ENCODE measurements at regions of chr1 and their contacts with region 1.

Region 1: DNA sequence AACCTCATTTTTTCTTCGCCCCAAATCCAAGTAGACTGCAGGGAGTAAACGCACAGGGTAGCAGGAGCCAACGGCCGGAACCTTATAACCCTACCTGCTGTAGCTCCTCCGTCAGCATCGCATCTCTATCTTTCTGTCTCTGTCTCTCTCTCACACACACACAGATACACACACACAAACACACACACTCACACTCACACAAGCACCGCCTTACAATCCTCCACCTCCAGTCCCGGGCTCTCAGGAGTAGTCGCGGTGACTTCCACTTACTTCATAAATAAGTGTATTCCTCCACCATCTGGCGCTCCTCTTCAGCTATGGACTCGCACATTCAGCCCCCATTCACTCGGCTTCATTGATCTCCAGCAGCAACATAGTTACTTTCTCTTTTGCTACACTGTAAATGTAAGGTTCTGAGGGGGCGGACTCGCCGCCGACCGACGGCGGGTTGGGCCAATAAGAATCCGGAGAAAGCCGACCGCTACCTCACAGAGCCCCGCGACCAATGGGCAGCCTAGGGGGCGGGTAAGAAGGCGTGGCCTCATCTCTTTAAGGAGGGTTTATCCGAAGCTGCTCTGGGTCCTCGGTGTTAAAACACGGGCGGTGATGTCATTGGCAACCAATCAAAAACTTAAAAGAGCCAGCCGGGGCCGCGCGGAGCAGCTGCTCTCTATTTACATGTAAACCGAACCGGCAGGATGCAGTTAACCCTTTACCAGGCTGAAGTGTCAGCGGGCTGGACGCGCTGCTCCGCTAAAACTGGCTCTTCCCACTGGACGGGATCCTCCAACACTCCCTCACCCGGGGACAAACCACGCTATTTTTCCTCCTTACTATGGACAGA is at the start of gene DUSP10:
- DNase-seq: peak; percentile 99
- H3K4me3 Mint-ChIP-seq: no peak within 1 kb of the TSS
- H3K27ac Mint-ChIP-seq: no peak within 1 kb of the TSS
- H3K4me1 Mint-ChIP-seq: peaks cover 41% of the 10 kb centered on the region
- H3K27me3 Mint-ChIP-seq: no peaks in the 10 kb centered on the region
- CTCF ChIP-seq: no peak
- total RNA-seq, gene DUSP10: 55.1 and 58.2 TPM in 2 replicates

Region 2: GRCh38 chr1:221478050-221478949 is 263.6 kb before region 1 on chr1:
- CTCF ChIA-PET with region 1: interaction called, 19 read pairs
- intact Hi-C with region 1: loop called (anchors 2 kb)
- DNase-seq: peak; percentile 81
- H3K4me3 Mint-ChIP-seq: no peak overlapping the region
- H3K27ac Mint-ChIP-seq: no peak overlapping the region
- H3K4me1 Mint-ChIP-seq: peaks cover 14% of the 10 kb centered on the region
- H3K27me3 Mint-ChIP-seq: no peaks in the 10 kb centered on the region
- CTCF ChIP-seq: peak; percentile 71

Region 3: DNA sequence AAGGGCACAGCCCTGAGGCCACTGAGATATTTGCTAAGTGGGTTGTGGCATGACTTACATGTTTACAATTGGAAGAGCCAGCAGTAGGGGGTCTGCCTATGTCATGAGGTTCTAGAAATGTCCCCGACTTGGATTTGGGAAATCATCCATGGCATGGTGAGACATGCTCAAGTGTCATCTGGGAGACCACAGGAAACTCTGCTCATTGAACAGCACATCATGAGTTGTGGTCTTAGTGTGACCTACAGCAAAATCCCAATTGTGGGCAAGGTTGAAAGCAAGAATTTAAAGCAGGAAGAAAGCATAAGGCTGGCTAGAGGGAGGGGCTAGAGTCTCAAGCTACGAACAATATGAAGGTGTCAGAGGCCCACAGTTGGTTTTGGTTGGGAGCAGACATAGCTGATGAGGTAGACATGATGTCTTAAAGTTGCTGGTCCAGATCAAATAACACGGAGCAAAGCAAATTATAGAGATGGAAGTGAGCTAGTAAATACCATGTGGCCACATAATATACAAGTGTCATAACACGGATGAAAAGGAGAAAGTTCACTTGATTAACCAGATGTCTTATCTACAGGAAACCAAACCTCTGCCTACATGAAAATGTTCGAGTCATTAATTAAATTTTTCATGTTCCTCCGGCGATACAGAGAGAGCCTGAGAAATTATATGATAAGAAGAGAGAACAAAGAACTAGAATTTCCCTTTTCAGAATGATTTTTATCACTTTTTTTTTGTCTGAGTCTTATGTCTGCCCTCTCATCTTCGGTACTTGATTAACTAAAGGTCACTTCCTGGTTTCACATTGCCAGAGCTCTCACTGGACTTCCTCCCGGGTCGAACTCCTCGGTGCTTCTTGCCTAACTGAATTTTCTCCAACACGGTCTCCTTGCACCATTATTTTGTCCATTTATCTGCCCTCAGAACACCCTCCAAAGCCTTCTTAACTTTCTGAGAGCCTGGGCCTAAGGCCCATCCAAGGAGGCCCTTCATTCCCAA is 67.4 kb after region 1 on chr1:
- CTCF ChIA-PET with region 1: no interaction called
- intact Hi-C with region 1: loop called (anchors 5 kb)
- DNase-seq: no peak
- H3K4me3 Mint-ChIP-seq: peak overlapping the region; percentile 13
- H3K27ac Mint-ChIP-seq: peak overlapping the region; percentile 71
- H3K4me1 Mint-ChIP-seq: peaks cover 65% of the 10 kb centered on the region
- H3K27me3 Mint-ChIP-seq: no peaks in the 10 kb centered on the region
- CTCF ChIP-seq: no peak

Region 4: GRCh38 chr1:221886743-221887413 is 144.9 kb after region 1 on chr1:
- CTCF ChIA-PET with region 1: interaction called, 3 read pairs
- intact Hi-C with region 1: loop called (anchors 5 kb)
- DNase-seq: peak; percentile 91
- H3K4me3 Mint-ChIP-seq: peak overlapping the region; percentile 57
- H3K27ac Mint-ChIP-seq: peak overlapping the region; percentile 93
- H3K4me1 Mint-ChIP-seq: peaks cover 48% of the 10 kb centered on the region
- H3K27me3 Mint-ChIP-seq: no peaks in the 10 kb centered on the region
- CTCF ChIP-seq: peak; percentile 23

Region 5: GRCh38 chr1:221937155-221937953 is 195.4 kb after region 1 on chr1:
- CTCF ChIA-PET with region 1: no interaction called
- intact Hi-C with region 1: no loop called
- DNase-seq: no peak
- H3K4me3 Mint-ChIP-seq: no peak overlapping the region
- H3K27ac Mint-ChIP-seq: no peak overlapping the region
- H3K4me1 Mint-ChIP-seq: peaks cover 21% of the 10 kb centered on the region
- H3K27me3 Mint-ChIP-seq: no peaks in the 10 kb centered on the region
- CTCF ChIP-seq: no peak

Region 6: DNA sequence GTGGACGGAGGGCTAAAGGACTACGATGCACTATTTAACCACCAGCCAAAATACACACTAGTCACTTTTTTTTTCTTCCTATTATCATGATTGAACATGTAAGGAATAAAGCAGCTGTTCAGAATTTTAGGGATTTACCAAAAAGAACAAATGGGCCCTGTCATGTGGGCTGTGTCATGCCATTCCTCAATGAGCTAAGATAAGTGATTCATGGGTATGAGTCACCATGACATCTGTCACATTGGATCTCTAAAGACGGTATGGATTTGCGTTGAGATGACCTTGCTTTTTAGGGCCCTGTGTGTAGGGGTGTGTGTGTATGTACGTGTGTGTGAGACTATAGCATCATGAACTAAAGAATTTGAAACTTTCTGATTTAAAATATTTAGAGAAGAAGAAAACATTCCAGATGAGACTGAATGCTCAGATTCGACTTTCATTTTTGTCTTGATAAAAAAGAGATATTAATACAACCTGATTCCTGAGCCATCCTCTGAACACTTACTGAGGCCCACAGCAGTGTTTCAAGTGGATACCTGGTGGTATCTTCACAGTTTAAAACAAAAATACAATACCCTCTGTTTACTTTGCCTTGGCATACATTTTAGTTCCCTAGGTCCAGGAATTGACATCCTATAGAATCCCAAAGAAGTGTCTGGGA is 246.1 kb after region 1 on chr1:
- CTCF ChIA-PET with region 1: interaction called, 7 read pairs
- intact Hi-C with region 1: loop called (anchors 5 kb)
- DNase-seq: no peak
- H3K4me3 Mint-ChIP-seq: peak overlapping the region; percentile 9
- H3K27ac Mint-ChIP-seq: peak overlapping the region; percentile 89
- H3K4me1 Mint-ChIP-seq: peaks cover 62% of the 10 kb centered on the region
- H3K27me3 Mint-ChIP-seq: no peaks in the 10 kb centered on the region
- CTCF ChIP-seq: no peak

Region 7: DNA sequence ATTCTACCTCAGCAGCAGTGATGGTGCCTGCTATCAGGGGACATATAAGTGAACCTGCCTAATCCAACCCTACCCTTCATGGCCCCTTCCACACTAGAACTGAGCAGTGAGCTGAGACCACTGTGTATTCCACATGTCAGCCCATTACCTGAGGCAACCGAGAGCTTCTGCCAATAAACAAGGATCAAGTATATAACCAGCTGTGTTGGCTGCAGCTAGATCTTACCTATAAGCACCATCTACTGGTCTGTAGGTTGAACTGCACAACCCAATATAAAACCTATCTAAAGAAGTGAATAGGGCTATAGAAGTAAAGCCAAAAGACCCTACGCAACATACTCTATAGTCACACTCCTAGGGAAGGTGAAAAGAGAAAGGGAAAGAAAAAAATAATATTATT is 429.1 kb after region 1 on chr1:
- CTCF ChIA-PET with region 1: interaction called, 5 read pairs
- intact Hi-C with region 1: loop called (anchors 5 kb)
- DNase-seq: peak; percentile 16
- H3K4me3 Mint-ChIP-seq: no peak overlapping the region
- H3K27ac Mint-ChIP-seq: no peak overlapping the region
- H3K4me1 Mint-ChIP-seq: no peaks in the 10 kb centered on the region
- H3K27me3 Mint-ChIP-seq: no peaks in the 10 kb centered on the region
- CTCF ChIP-seq: peak; percentile 73

Measured in Calu3 (cell line).